Astrocyte of the cerebellum (primary cell): ENCODE measurements at regions of chr13 and their contacts with region 1.

Region 1: GRCh38 chr13:107124129-107124718 is 556.3 kb upstream of the ARGLU1 start:
- DNase-seq: peak; percentile 11
- H3K4me3 ChIP-seq: no peak overlapping the region
- CTCF ChIP-seq: peak; percentile 36

Region 2: GRCh38 chr13:106555631-106556328 is 568.4 kb before region 1 on chr13:
- in situ Hi-C with region 1: loop called (anchors 10 kb)
- DNase-seq: no peak
- H3K4me3 ChIP-seq: no peak overlapping the region
- CTCF ChIP-seq: no peak